T-cell (primary cell): ENCODE measurements at regions of chr1 and their contacts with region 1.

Region 1: DNA sequence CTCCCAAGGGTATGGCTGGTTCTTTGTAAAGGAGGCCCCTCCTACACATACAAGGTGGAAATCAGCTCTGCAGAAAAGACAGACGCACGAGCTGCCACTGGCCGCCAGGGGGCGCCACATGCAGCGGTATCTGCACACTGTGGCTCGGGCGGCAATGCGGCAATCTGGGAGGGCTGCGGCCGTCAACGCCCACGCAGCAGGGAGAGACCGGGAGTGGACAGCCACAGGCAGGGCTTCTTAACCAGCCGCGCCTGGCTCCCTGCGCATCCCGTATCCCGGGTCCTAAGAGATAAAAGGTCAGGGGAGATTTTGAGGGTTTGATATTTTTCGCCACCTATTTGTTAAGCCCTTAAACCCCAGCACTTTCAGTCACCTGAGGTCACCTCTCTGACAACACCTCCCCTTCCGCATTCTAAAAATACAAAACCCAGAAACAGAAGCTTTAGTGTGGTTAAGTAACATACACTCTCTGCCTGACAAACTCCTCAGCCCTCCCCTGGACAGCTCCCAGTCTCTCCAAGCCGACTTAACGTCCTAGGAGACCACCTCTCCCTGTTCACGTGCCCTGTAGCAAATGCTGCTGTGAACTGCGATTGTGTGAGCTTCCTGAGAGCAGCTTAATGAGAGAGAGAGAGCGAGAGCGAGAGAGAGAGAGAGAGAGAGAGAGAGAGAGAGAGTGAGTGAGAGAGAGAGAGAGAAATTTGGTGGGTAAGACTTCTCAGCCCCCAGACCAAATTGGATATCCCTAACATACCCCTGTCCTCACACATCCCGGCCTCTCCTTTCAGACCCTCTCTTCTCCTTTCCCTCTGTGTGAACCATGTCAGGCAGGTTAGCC is 13.5 kb upstream of the KCNA2 start:
- DNase-seq: peak; percentile 74 to 95 (median 86)
- ATAC-seq: peak; percentile 85 to 90 (median 86)
- H3K4me3 ChIP-seq: peak overlapping the region; percentile 67 to 73
- H3K4me3 Mint-ChIP-seq: peak overlapping the region; percentile 83 to 87 (median 86)
- H3K27ac ChIP-seq: peak overlapping the region; percentile 79
- H3K27ac Mint-ChIP-seq: peak overlapping the region; percentile 88 to 92
- H3K4me1 ChIP-seq: peaks cover 17 to 36% of the 10 kb centered on the region in 2 experiments
- H3K4me1 Mint-ChIP-seq: peaks cover 31 to 45% (median 41%) of the 10 kb centered on the region in 3 donors
- H3K27me3 ChIP-seq: no peaks in the 10 kb centered on the region
- H3K27me3 Mint-ChIP-seq: no peaks in the 10 kb centered on the region

Region 2: DNA sequence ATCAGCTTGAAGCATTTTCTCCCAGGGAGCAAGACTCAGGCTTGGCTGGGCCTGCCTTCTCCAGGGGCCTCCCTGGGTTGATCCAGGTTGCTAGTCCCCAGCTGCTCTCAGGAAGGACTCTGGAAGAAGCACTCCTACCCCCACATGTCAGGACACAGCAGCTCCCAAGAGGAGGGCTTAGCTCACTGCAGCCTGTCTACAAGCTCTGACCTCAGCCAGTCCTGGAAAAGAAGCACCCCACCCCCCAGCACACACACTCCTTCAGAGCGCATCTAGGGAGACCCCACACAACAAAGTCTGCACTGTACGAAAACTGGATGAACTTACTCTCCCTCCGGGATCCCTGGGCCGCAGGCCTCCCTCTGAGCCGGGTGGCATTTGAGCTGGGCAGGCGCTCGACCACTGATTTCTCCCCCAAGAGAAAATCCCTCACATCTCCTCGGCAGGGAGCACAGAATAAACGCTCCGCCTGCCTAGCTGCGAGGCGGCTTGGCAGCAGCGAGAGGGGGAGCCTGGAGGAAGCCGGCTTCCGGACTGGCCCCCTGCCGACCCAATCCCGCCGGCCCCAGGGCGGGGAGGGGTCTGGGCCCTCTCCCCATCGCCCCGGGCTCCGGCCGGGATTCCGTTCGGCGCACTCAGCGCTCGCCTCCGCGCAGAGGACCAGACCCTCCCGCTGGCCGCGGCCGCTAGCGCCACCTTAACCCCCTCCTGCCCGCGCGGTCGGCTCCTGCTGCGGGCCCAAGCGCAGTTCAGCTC is 13.6 kb before region 1 on chr1 and contains the start of gene KCNA2:
- CTCF ChIA-PET with region 1: interaction called in 1 of 2 experiments, 10 read pairs
- POLR2A ChIA-PET with region 1: no interaction called
- DNase-seq: peak in 4 of 35 experiments; percentile 11 to 26 (median 12)
- ATAC-seq: peak; percentile 38 to 54 (median 40)
- H3K4me3 ChIP-seq: peak within 1 kb of the TSS; percentile 51 to 84
- H3K4me3 Mint-ChIP-seq: peak within 1 kb of the TSS; percentile 77 to 83 (median 79)
- H3K27ac ChIP-seq: no peak within 1 kb of the TSS
- H3K27ac Mint-ChIP-seq: no peak within 1 kb of the TSS
- H3K4me1 ChIP-seq: peaks cover 3 to 24% of the 10 kb centered on the region in 2 experiments
- H3K4me1 Mint-ChIP-seq: peaks cover 9 to 30% (median 12%) of the 10 kb centered on the region in 3 donors
- H3K27me3 ChIP-seq: peaks cover 22 to 48% of the 10 kb centered on the region in 2 experiments
- H3K27me3 Mint-ChIP-seq: peaks cover 20 to 60% of the 10 kb centered on the region in 2 donors
- total RNA-seq, gene KCNA2: 0.46 to 2.7 (median 0.93) TPM

Region 3: GRCh38 chr1:110645821-110646735 is 26.4 kb after region 1 on chr1:
- CTCF ChIA-PET with region 1: interaction called in 1 of 2 experiments, 21 read pairs
- POLR2A ChIA-PET with region 1: interaction called in 1 of 2 experiments, 6 read pairs
- DNase-seq: no peak
- ATAC-seq: peak in 2 of 4 experiments; percentile 30 to 46
- H3K4me3 ChIP-seq: no peak overlapping the region
- H3K4me3 Mint-ChIP-seq: peak overlapping the region in 2 of 3 donors; percentile 16 to 29
- H3K27ac ChIP-seq: peak overlapping the region; percentile 64
- H3K27ac Mint-ChIP-seq: peak overlapping the region in 1 of 2 donors; percentile 84
- H3K4me1 ChIP-seq: peaks cover 43 to 55% of the 10 kb centered on the region in 2 experiments
- H3K4me1 Mint-ChIP-seq: peaks cover 41 to 47% (median 42%) of the 10 kb centered on the region in 3 donors
- H3K27me3 ChIP-seq: no peaks in the 10 kb centered on the region
- H3K27me3 Mint-ChIP-seq: no peaks in the 10 kb centered on the region

Region 4: DNA sequence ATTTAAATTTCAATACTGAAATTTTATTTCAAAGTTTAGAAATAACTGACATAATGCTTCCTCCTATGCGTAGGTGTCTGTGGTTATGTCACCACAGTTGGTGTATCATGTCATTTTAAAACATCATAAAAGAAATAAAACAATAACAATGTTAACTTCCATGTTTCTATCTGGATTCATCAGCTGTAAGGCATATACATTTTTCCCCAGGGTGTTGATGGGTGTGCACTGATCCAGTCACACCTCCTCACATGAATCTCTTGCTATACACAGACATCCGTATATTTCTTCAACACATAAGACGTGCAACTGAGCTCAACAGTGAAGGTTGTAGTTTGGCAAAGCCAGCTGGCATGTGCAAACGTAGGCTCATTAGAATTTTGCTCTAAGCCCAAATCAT is 48.9 kb after region 1 on chr1:
- CTCF ChIA-PET with region 1: interaction called, 7 to 13 read pairs
- POLR2A ChIA-PET with region 1: interaction called in 1 of 2 experiments, 3 read pairs
- DNase-seq: peak in 16 of 35 experiments; percentile 2 to 58 (median 12)
- ATAC-seq: peak in 1 of 4 experiments; percentile 33
- H3K4me3 ChIP-seq: peak overlapping the region in 1 of 2 donors; percentile 30
- H3K4me3 Mint-ChIP-seq: peak overlapping the region; percentile 75 to 96 (median 93)
- H3K27ac ChIP-seq: peak overlapping the region; percentile 96
- H3K27ac Mint-ChIP-seq: peak overlapping the region; percentile 81 to 87
- H3K4me1 ChIP-seq: peaks cover 9 to 52% of the 10 kb centered on the region in 2 experiments
- H3K4me1 Mint-ChIP-seq: peaks cover 21 to 35% (median 31%) of the 10 kb centered on the region in 3 donors
- H3K27me3 ChIP-seq: no peaks in the 10 kb centered on the region
- H3K27me3 Mint-ChIP-seq: no peaks in the 10 kb centered on the region

Region 5: DNA sequence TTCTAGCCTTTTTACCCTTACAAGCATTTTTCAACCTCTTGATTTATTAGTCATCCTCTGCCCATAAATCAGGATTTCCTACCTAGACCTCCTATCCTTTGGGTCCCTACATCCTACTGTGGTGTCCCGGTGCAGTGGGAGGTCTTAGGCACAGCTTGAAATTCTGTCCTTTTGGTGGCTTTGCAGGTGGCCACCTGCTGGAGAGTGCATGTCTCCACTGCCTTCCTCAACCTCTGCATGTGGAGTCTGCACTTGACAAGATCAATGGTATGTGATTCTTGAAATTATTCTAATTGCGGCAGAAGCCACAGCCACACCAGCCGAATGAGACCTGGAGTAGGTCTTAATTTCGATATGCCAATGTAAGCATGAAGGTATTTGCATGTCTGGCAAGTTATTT is 66.6 kb after region 1 on chr1:
- CTCF ChIA-PET with region 1: interaction called in 1 of 2 experiments, 12 read pairs
- POLR2A ChIA-PET with region 1: no interaction called
- DNase-seq: peak in 23 of 35 experiments; percentile 4 to 62 (median 25)
- ATAC-seq: peak; percentile 69 to 83 (median 81)
- H3K4me3 ChIP-seq: no peak overlapping the region
- H3K4me3 Mint-ChIP-seq: no peak overlapping the region
- H3K27ac ChIP-seq: no peak overlapping the region
- H3K27ac Mint-ChIP-seq: no peak overlapping the region
- H3K4me1 ChIP-seq: peaks cover 0 to 4% of the 10 kb centered on the region in 2 experiments
- H3K4me1 Mint-ChIP-seq: peaks cover 4 to 8% (median 5%) of the 10 kb centered on the region in 3 donors
- H3K27me3 ChIP-seq: no peaks in the 10 kb centered on the region
- H3K27me3 Mint-ChIP-seq: no peaks in the 10 kb centered on the region

Region 6: GRCh38 chr1:110766025-110766647 is 146.5 kb after region 1 on chr1:
- CTCF ChIA-PET with region 1: interaction called, 15 to 122 read pairs
- POLR2A ChIA-PET with region 1: interaction called, 3 to 6 read pairs
- DNase-seq: peak in 33 of 35 experiments; percentile 24 to 87 (median 46)
- ATAC-seq: peak; percentile 58 to 83 (median 70)
- H3K4me3 ChIP-seq: no peak overlapping the region
- H3K4me3 Mint-ChIP-seq: no peak overlapping the region
- H3K27ac ChIP-seq: no peak overlapping the region
- H3K27ac Mint-ChIP-seq: peak overlapping the region in 1 of 2 donors; percentile 45
- H3K4me1 ChIP-seq: no peaks in the 10 kb centered on the region
- H3K4me1 Mint-ChIP-seq: peaks cover 4 to 9% (median 4%) of the 10 kb centered on the region in 3 donors
- H3K27me3 ChIP-seq: peaks cover 0 to 2% of the 10 kb centered on the region in 2 experiments
- H3K27me3 Mint-ChIP-seq: peaks cover 14 to 18% of the 10 kb centered on the region in 2 donors

Region 7: GRCh38 chr1:110787328-110788071 is 167.9 kb after region 1 on chr1:
- CTCF ChIA-PET with region 1: interaction called, 5 to 75 read pairs
- POLR2A ChIA-PET with region 1: no interaction called
- DNase-seq: peak in 28 of 35 experiments; percentile 5 to 73 (median 33)
- ATAC-seq: peak; percentile 80 to 89 (median 86)
- H3K4me3 ChIP-seq: peak overlapping the region; percentile 25 to 30
- H3K4me3 Mint-ChIP-seq: peak overlapping the region; percentile 26 to 66 (median 53)
- H3K27ac ChIP-seq: peak overlapping the region; percentile 57
- H3K27ac Mint-ChIP-seq: peak overlapping the region; percentile 87 to 88
- H3K4me1 ChIP-seq: peaks cover 28 to 53% of the 10 kb centered on the region in 2 experiments
- H3K4me1 Mint-ChIP-seq: peaks cover 61 to 70% (median 67%) of the 10 kb centered on the region in 3 donors
- H3K27me3 ChIP-seq: no peaks in the 10 kb centered on the region
- H3K27me3 Mint-ChIP-seq: no peaks in the 10 kb centered on the region

Region 8: DNA sequence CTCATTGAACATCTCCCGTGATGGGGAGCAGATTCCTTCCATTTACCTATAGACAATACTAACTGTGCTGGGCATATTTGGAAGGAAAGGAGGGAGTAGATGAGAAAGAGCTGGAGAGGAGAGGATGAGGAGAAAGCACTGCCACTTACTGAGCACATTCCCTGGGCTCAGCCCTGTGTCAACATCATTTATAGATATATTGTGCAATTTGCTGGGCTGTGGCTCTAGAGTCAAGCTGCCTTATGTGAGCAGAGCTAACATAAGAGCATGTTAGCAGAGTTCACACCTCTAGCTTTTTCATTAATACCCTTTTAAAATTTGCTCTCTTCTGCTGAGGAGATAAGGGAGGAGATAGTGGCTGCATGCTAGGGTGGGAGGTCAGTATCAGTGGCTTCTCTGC is 231.0 kb after region 1 on chr1:
- CTCF ChIA-PET with region 1: no interaction called
- POLR2A ChIA-PET with region 1: no interaction called
- DNase-seq: no peak
- ATAC-seq: no peak
- H3K4me3 ChIP-seq: no peak overlapping the region
- H3K4me3 Mint-ChIP-seq: no peak overlapping the region
- H3K27ac ChIP-seq: no peak overlapping the region
- H3K27ac Mint-ChIP-seq: no peak overlapping the region
- H3K4me1 ChIP-seq: no peaks in the 10 kb centered on the region
- H3K4me1 Mint-ChIP-seq: peaks cover 0 to 2% (median 0%) of the 10 kb centered on the region in 3 donors
- H3K27me3 ChIP-seq: no peaks in the 10 kb centered on the region
- H3K27me3 Mint-ChIP-seq: peaks cover 0 to 6% of the 10 kb centered on the region in 2 donors